GM12878 (cell line): ENCODE measurements at regions of chr1 and their contacts with region 1.

Region 1: GRCh38 chr1:28160782-28161266 is 15.7 kb downstream of the PTAFR start:
- DNase-seq: no peak
- ATAC-seq: no peak; the same call in 2 of the 3 replicates
- H3K4me3 ChIP-seq: no peak overlapping the region
- H3K27ac ChIP-seq: no peak overlapping the region
- H3K4me1 ChIP-seq: no peaks in the 10 kb centered on the region; the same call in 1 of the 2 replicates
- H3K27me3 ChIP-seq: no peaks in the 10 kb centered on the region
- CTCF ChIP-seq: no peak
- EP300 ChIP-seq: no peak
- POLR2A ChIP-seq: no peak
- RAD21 ChIP-seq: no peak

Region 2: GRCh38 chr1:27772933-27773825 is 387.6 kb before region 1 on chr1 and contains the start of gene STX12:
- CTCF ChIA-PET with region 1: no interaction called
- POLR2A ChIA-PET with region 1: no interaction called
- RAD21 ChIA-PET with region 1: no interaction called
- SMC1A ChIA-PET with region 1: no interaction called
- in situ Hi-C with region 1: no loop called
- intact Hi-C with region 1: no loop called
- DNase-seq: peak; percentile 100
- ATAC-seq: peak; percentile 93
- H3K4me3 ChIP-seq: peak within 1 kb of the TSS; percentile 81
- H3K27ac ChIP-seq: peak within 1 kb of the TSS; percentile 89
- H3K4me1 ChIP-seq: peaks cover 6% of the 10 kb centered on the region
- H3K27me3 ChIP-seq: no peaks in the 10 kb centered on the region
- CTCF ChIP-seq: no peak
- EP300 ChIP-seq: no peak
- POLR2A ChIP-seq: peak; percentile 87
- RAD21 ChIP-seq: no peak
- polyA plus RNA-seq, gene STX12: 23.5 to 26.9 TPM

Region 3: GRCh38 chr1:28010969-28011368 is 149.9 kb before region 1 on chr1:
- CTCF ChIA-PET with region 1: no interaction called
- POLR2A ChIA-PET with region 1: no interaction called
- RAD21 ChIA-PET with region 1: no interaction called
- SMC1A ChIA-PET with region 1: no interaction called
- in situ Hi-C with region 1: no loop called
- intact Hi-C with region 1: no loop called
- DNase-seq: no peak
- ATAC-seq: no peak
- H3K4me3 ChIP-seq: no peak overlapping the region
- H3K27ac ChIP-seq: no peak overlapping the region
- H3K4me1 ChIP-seq: no peaks in the 10 kb centered on the region
- H3K27me3 ChIP-seq: no peaks in the 10 kb centered on the region
- CTCF ChIP-seq: no peak
- EP300 ChIP-seq: no peak
- POLR2A ChIP-seq: no peak
- RAD21 ChIP-seq: no peak

Region 4: GRCh38 chr1:28150125-28150780 is 10.6 kb before region 1 on chr1:
- CTCF ChIA-PET with region 1: interaction called, 6 read pairs
- POLR2A ChIA-PET with region 1: interaction called, 9 read pairs
- RAD21 ChIA-PET with region 1: interaction called, 3 read pairs
- SMC1A ChIA-PET with region 1: interaction called, 33 read pairs
- in situ Hi-C with region 1: no loop called
- intact Hi-C with region 1: no loop called
- DNase-seq: no peak
- ATAC-seq: no peak
- H3K4me3 ChIP-seq: no peak overlapping the region
- H3K27ac ChIP-seq: no peak overlapping the region
- H3K4me1 ChIP-seq: peaks cover 30% of the 10 kb centered on the region
- H3K27me3 ChIP-seq: no peaks in the 10 kb centered on the region
- CTCF ChIP-seq: no peak
- EP300 ChIP-seq: no peak
- POLR2A ChIP-seq: no peak
- RAD21 ChIP-seq: no peak